Mammary epithelial cell (primary cell): ENCODE measurements at regions of chr5 and their contacts with region 1.

Region 1: DNA sequence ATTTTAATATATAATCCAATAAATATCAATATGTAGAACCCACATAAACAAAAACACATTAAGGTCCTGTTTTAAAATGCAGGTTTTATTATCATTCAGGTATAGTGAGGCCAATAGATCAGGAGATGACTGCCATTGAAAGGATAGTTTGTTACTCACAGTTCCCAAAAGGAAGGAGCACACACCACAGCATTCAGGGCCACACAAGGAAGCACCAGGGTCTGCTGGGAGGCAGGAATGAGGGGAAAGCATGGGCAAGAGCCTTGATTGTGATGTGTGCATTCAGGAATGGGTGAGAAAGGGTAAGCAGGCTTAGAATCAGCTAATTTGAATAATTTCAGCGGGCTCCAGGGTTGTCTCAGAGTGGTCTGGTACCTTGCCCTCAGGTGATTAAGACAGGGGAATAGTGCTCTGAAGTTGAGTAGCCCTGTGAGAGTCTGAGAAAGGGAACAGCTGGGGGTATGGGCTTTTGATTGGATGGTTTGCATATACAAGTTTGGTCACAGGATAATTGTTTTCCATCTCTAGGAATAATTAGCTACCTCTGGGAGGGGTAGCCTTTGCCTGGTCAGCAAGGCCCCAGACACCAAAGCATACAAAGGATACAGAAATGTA is 19.8 kb upstream of the OTULIN start:
- DNase-seq: no peak
- H3K4me3 ChIP-seq: no peak overlapping the region
- H3K27ac ChIP-seq: no peak overlapping the region
- H3K4me1 ChIP-seq: no peaks in the 10 kb centered on the region
- H3K27me3 ChIP-seq: peaks cover 3% of the 10 kb centered on the region
- CTCF ChIP-seq: no peak

Region 2: GRCh38 chr5:13385066-13385465 is 1259.7 kb before region 1 on chr5:
- CTCF ChIA-PET with region 1: no interaction called
- dilution Hi-C with region 1: no loop called
- in situ Hi-C with region 1: no loop called
- intact Hi-C with region 1: no loop called
- DNase-seq: no peak
- H3K4me3 ChIP-seq: no peak overlapping the region
- H3K27ac ChIP-seq: no peak overlapping the region
- H3K4me1 ChIP-seq: no peaks in the 10 kb centered on the region
- H3K27me3 ChIP-seq: no peaks in the 10 kb centered on the region
- CTCF ChIP-seq: no peak

Region 3: DNA sequence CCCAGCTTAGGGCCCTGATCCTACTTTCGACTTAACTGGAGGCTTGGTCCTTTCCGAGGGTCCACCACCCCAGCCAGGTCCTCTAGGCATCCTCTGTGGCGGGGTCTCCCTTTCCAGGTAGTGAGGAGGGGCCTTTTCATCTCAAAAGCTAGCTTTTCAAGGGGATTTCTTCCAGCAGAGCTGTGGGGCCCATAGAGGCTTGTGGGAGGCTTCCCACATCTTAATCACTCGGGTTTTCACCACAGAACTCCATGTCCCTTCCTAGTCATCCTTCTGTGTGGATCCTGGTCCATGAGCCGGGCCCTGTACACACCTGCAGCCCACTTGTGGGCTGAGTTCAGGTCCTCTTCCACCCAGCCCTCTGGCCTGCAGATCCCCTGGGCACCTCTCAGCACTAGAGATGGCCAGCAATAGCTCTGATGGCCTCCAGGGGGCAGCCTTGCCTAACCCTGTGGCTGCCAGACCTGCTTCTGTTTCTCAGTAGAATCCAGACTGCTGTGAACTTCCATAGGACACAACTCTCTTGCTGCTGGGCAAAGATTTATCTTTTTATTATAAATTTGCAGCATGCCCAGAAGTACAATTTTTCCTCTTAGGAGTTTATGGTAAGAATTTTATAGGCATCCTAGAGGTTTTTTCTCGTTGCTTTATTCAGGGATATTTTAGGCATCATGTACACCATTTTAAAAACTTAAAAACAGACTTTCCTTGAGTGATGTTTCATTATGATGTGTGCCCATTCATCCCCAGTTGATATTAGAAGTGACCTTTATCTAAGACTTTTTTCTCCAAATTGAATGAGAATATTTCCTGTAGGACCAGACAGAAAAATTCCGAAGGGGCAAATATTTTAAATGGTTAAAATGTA is 292.7 kb before region 1 on chr5:
- CTCF ChIA-PET with region 1: interaction called, 3 read pairs
- dilution Hi-C with region 1: no loop called
- in situ Hi-C with region 1: no loop called
- intact Hi-C with region 1: loop called (anchors 1 kb)
- DNase-seq: peak; percentile 43
- H3K4me3 ChIP-seq: no peak overlapping the region
- H3K27ac ChIP-seq: no peak overlapping the region
- H3K4me1 ChIP-seq: peaks cover 12% of the 10 kb centered on the region
- H3K27me3 ChIP-seq: no peaks in the 10 kb centered on the region
- CTCF ChIP-seq: peak; percentile 97 to 98

Region 4: DNA sequence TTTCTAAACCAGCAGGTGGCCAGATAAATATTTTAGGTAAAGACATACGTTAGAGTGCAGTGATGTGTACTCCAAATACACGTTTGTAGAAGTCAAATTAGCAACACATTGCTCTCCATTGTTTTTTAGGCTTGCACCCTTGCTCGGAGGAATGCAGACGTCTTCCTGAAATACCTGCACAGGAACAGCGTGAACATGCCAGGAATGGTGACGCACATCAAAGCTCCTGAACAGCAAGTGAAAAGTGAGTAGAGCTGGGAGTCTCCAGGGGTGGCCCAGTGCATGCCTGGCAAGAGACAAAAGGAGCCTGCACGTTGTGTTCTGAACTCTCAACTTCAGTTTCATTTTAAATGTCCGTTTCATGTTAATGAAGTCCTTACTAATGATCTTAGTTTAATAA is 270.6 kb before region 1 on chr5:
- CTCF ChIA-PET with region 1: no interaction called
- dilution Hi-C with region 1: no loop called
- in situ Hi-C with region 1: no loop called
- intact Hi-C with region 1: no loop called
- DNase-seq: peak; percentile 37
- H3K4me3 ChIP-seq: no peak overlapping the region
- H3K27ac ChIP-seq: no peak overlapping the region
- H3K4me1 ChIP-seq: peaks cover 6% of the 10 kb centered on the region
- H3K27me3 ChIP-seq: no peaks in the 10 kb centered on the region
- CTCF ChIP-seq: no peak

Region 5: DNA sequence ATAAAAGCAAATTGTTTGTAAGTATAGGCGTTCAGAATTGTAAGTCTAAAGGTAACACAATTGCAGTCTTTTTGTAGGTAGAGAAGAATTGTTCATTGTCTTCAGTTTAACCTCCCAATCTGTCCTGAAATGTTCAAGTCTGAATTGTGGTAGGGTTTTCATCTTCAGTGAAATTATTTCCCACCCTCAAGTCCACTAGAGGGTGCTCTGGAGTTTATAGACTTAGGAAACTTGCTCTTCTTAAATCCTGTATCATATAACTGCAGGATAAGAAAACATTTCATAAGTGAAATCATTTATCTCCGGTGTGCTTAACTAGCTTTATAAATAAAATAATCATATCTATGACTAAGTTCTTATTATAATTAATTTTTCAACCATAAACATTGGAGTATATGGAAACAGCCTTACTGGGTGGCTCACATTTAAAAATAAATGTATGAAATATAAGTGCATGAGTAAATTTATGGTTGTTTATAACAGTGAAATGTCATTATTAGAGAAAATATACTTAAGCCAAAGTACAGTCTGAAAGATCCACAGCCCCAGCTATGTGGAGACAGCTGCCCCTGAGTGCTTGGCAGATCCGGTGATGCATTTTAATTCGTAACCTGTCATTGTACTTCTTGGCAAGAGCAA is 245.6 kb before region 1 on chr5:
- CTCF ChIA-PET with region 1: no interaction called
- dilution Hi-C with region 1: no loop called
- in situ Hi-C with region 1: loop called (anchors 10 kb)
- intact Hi-C with region 1: loop called (anchors 1 kb)
- DNase-seq: peak; percentile 31
- H3K4me3 ChIP-seq: no peak overlapping the region
- H3K27ac ChIP-seq: no peak overlapping the region
- H3K4me1 ChIP-seq: peaks cover 31% of the 10 kb centered on the region
- H3K27me3 ChIP-seq: no peaks in the 10 kb centered on the region
- CTCF ChIP-seq: peak; percentile 66 to 70

Region 6: DNA sequence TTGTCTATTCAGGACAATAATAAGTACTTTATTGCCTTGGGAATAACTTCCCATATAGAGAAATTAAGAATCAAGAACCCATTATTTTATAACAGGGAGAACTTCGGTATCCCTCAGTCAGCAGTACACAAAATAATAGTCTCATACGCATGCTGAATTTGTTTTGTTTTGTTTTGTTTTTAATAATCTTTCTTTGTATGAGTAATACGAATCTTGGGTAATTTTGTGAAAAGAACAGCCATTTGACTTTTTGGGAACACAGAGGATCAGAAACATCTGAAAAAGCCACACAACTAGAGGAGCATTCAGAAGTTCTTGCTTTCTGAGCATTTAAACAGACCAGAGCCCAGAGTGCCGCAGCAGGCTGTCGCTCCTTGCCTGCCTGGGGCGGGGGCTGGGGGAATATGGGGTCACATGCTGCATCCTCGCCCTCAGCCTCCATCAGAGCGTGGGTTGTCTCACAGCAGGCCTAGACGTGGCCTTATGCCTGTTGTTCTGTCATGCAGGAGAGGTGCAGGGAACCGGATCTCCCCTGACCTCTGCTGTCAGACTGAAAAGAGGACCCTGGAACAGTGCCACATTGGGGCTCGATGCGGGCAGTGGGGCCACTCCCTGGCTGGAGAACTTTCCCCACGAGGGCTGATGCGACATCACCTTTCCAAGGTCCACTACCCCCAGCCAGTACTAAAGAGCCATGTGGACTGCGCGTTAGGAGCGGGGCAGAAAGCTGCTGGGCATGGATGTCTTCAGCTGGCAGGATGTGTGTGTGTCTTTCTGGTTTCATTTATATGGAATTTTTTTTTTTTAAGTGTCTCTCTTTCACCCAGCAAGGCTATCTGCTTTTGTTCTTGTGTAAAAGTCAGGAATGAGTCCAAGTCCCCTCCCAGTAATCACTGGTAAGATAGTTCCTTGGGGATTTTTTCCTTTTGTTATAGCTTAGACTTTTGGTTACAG is 196.5 kb before region 1 on chr5:
- CTCF ChIA-PET with region 1: no interaction called
- dilution Hi-C with region 1: no loop called
- in situ Hi-C with region 1: no loop called
- intact Hi-C with region 1: no loop called
- DNase-seq: no peak
- H3K4me3 ChIP-seq: no peak overlapping the region
- H3K27ac ChIP-seq: no peak overlapping the region
- H3K4me1 ChIP-seq: peaks cover 18% of the 10 kb centered on the region
- H3K27me3 ChIP-seq: no peaks in the 10 kb centered on the region
- CTCF ChIP-seq: no peak

Region 7: DNA sequence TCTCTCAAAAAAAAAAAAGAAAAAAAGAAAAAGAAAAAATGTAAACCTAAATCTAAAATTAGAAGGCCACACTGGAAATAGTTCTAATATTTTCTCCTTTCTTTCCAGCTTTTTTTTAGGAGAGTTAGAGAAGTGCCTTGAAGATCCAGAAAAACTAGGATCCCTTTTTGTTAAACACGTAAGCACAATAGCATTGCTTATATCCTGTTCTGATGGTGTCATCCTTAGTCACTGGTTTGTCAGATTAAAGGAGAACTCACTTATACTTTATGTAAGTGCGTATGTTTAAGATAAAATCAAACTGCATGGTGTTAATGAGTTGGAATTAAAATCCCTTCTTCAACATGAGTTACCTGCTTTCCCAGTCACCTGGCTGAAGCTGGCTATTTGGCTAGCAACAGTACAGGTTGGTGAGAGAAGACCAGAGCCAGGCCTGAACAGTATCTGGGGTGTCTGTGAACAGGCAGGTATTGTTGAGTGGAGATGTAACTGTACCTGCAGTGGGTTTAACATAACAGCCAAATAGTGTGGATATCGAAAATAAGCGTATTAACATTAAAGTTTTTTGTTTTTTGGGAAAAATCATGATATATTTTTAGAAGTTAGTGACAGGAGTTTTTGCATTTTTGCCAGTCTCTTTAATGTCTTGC is 167.8 kb before region 1 on chr5:
- CTCF ChIA-PET with region 1: no interaction called
- dilution Hi-C with region 1: no loop called
- in situ Hi-C with region 1: no loop called
- intact Hi-C with region 1: loop called (anchors 10 kb)
- DNase-seq: peak; percentile 79
- H3K4me3 ChIP-seq: no peak overlapping the region
- H3K27ac ChIP-seq: peak overlapping the region; percentile 71
- H3K4me1 ChIP-seq: peaks cover 34% of the 10 kb centered on the region
- H3K27me3 ChIP-seq: no peaks in the 10 kb centered on the region
- CTCF ChIP-seq: no peak